Posterior vena cava (tissue), 2 donors: ENCODE measurements at regions of chr20 and their contacts with region 1.

Region 1: GRCh38 chr20:48102914-48103597 is 317.8 kb upstream of the SULF2 start:
- DNase-seq: no peak

Region 2: DNA sequence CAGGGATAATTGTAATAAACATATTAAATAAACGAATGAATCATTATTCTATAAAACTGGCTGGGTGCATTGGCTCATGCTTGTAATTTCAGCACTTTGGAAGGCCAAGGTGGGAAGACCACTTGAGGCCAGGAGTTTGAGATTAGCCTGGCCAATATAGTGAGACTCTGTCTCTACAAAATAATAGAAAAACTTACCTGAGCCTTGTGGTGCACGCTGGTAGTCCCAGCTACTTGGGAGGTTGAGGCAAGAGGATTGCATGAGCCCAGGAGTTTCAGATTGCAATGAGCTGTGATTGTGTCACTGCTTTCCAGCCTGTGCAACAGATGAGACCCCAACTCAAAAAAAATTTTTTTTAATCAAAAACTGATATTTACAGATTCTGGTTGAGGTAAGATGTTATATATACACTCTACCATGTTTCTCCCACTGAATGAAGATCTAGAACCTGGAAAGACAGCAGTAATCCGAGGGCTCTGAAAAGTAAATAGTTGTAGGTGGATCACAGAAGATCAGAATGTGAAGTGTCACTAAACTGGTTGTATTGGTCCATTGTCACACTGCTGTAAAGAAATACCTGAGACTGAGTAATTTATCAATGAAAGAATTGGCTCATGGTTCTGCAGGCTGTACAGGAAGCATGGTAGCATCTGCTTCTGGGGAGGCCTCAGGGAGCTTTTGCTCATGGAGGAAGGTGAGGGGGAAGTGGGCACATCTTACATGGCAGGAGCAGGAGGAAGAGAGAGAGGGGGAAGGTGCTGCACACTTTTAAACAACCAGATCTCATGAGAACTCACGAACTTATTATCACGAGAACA is 20.9 kb before region 1 on chr20:
- intact Hi-C with region 1: loop called in 1 of 2 experiments (anchors 1 kb)
- DNase-seq: no peak

Region 3: GRCh38 chr20:48122988-48123664 is 20.1 kb after region 1 on chr20:
- intact Hi-C with region 1: loop called in 1 of 2 experiments (anchors 1 kb)
- DNase-seq: no peak